Pancreas (tissue), 10 donors: ENCODE measurements at regions of chr5 and their contacts with region 1.

Region 1: DNA sequence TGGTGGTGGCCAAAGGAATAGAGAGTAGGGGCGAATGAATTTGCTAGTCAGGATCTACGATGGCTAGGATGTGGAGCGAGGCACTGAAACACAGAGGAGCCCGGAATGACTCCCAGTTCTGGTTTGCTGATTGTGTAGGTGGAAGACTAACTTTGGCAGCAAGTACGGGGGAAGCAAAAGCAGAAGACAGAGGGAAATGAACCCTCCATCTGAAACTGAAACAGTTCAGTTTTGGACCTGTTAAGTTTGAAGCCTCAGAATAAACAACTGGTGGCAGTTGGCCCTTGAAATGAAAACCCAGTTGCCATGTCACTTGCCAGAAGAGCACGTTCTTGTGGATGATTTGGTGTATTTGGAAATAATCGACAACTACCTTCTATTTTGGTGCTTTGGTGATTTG is 15.4 kb upstream of the SMIM15 start:
- DNase-seq: no peak
- ATAC-seq: no peak
- H3K4me3 ChIP-seq: no peak overlapping the region
- H3K27ac ChIP-seq: no peak overlapping the region
- H3K4me1 ChIP-seq: peaks cover 0 to 16% (median 0%) of the 10 kb centered on the region in 3 donors
- H3K27me3 ChIP-seq: no peaks in the 10 kb centered on the region
- CTCF ChIP-seq: no peak

Region 2: DNA sequence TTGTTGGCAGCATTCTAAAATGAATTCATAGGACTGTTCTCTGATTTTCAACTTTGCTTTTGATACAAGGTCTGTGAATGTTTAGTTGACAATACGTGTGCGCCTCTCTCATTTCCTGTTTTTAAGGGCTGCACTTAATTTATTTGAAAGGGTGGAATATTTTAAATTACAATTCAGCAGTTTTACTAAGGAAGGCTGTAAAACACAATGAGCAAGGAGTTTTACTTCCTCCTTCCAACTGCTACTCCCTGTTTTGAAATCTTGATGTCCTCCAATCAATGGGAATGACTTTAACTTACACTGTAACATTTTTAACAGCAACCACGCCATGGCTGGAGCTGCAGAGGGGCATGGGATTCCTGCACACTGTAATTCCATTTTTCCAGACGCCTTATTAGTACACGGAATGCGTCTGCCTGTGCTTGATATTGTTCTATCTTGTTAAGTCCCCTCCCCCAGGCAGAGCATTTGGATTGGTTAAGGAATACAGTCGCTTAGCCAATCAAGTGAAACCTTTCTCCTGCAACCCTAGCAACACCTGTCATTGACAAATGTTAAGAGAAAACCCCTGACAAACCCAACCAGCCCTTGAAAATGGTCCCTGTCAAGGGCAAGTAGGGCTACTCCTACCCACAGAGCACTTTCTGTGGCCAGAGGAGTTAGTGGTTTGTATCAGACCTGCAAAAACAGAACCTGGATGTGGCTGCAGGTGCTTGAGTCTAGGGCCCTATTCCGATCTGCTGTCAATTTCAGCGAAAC is 141.9 kb after region 1 on chr5:
- intact Hi-C with region 1: loop called in 2 of 3 experiments (anchors 10 kb)
- DNase-seq: peak in 1 of 6 donors; percentile 54
- ATAC-seq: peak; percentile 55 to 88 (median 76)
- H3K4me3 ChIP-seq: no peak overlapping the region
- H3K27ac ChIP-seq: peak overlapping the region in 2 of 4 donors; percentile 32 to 43
- H3K4me1 ChIP-seq: peaks cover 0 to 16% (median 4%) of the 10 kb centered on the region in 3 donors
- H3K27me3 ChIP-seq: no peaks in the 10 kb centered on the region
- CTCF ChIP-seq: no peak

Region 3: GRCh38 chr5:61625681-61626621 is 448.2 kb after region 1 on chr5:
- intact Hi-C with region 1: no loop called
- DNase-seq: peak; percentile 81 to 91 (median 89)
- ATAC-seq: peak; percentile 95 to 98 (median 96)
- H3K4me3 ChIP-seq: peak overlapping the region; percentile 21 to 60 (median 50)
- H3K27ac ChIP-seq: peak overlapping the region; percentile 33 to 78 (median 63)
- H3K4me1 ChIP-seq: peaks cover 0 to 10% (median 8%) of the 10 kb centered on the region in 3 donors
- H3K27me3 ChIP-seq: no peaks in the 10 kb centered on the region
- CTCF ChIP-seq: no peak